Dendritic cell treated with granulocyte-macrophage colony-stimulating factor and Interleukin-4, amounts not matched to agents 40 ng/mL and 50 ng/mL, for 4 days (primary cell): ENCODE measurements at regions of chr9 and their contacts with region 1.

Region 1: DNA sequence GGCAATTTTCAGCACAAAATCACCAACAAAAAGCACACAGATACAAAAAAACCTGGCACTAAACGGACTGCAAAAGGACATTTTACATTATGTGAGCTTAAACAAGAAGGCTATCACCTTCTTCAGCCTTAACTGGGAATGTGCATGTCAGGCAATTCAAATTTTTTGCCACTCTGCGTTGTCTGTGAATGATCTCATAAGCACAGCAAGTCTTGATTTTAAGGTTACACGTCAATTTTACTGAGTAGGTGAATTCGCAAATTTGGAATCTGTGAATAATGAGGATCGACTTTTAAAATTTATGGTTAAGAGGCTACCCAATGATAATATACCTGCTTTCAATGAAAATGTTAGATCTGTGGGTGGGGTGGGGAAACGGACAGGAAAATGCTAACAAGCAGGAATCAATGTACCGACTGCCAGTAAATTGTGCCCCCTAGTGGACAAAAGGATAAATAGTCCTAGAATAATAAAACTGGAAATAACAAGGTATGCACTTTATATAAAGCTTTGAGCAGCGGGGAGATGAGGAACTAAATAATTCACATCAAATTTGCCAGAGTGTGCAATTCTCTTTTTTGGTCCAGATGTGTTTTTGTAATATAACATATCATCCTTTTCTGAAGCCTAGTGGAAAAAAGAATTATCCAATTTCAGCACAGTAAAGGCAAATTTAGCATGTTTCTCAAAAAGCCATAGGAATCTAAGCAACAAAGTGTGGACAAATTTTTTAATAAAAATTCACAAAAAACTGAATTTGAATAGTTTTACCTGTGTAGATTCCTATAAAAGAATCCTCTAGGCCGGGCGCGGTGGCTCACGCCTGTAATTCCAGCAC is 20.5 kb downstream of the EQTN start:
- H3K4me3 Mint-ChIP-seq: no peak overlapping the region
- H3K27ac Mint-ChIP-seq: no peak overlapping the region
- H3K4me1 Mint-ChIP-seq: peaks cover 24% of the 10 kb centered on the region
- H3K27me3 Mint-ChIP-seq: no peaks in the 10 kb centered on the region

Region 2: DNA sequence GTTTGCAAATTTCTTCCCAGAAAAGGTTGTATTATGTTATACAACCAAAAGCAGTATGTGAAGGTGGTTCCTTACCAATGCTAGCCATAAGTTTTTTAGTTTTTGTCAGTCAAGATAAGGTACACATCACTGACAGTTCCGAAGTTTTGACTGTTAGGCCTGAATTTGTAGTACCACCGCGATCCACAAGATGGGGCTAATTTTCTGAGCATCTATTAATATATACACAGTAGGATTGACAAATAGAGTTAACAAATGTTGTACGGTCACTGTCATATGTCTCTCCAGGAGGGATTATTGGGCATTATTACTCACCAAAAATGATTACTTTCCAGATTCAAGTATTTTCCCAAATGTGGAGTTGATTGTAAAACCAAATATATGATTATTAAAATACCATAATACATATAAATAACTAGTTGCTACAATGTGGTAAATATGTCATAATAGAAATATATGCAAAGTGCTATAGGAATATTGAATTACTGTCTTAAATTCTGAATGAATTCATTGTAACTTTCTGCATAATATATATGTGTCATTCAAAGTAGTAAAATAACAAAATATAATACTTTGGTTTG is 242.5 kb before region 1 on chr9:
- intact Hi-C with region 1: loop called (anchors 2 kb)
- H3K4me3 Mint-ChIP-seq: no peak overlapping the region
- H3K27ac Mint-ChIP-seq: no peak overlapping the region
- H3K4me1 Mint-ChIP-seq: no peaks in the 10 kb centered on the region
- H3K27me3 Mint-ChIP-seq: no peaks in the 10 kb centered on the region

Region 3: GRCh38 chr9:27047136-27047535 is 229.3 kb before region 1 on chr9:
- intact Hi-C with region 1: loop called (anchors 5 kb)
- H3K4me3 Mint-ChIP-seq: peak overlapping the region; percentile 34
- H3K27ac Mint-ChIP-seq: peak overlapping the region; percentile 63
- H3K4me1 Mint-ChIP-seq: no peaks in the 10 kb centered on the region
- H3K27me3 Mint-ChIP-seq: no peaks in the 10 kb centered on the region